HEK293T (cell line): ENCODE measurements at regions of chr16 and their contacts with region 1.

Region 1: GRCh38 chr16:700684-701584 is 4.7 kb downstream of the FBXL16 start:
- DNase-seq: peak; percentile 62

Region 2: GRCh38 chr16:626787-627186 is 74.1 kb before region 1 on chr16:
- CTCF ChIA-PET with region 1: no interaction called
- POLR2A ChIA-PET with region 1: no interaction called
- DNase-seq: no peak

Region 3: DNA sequence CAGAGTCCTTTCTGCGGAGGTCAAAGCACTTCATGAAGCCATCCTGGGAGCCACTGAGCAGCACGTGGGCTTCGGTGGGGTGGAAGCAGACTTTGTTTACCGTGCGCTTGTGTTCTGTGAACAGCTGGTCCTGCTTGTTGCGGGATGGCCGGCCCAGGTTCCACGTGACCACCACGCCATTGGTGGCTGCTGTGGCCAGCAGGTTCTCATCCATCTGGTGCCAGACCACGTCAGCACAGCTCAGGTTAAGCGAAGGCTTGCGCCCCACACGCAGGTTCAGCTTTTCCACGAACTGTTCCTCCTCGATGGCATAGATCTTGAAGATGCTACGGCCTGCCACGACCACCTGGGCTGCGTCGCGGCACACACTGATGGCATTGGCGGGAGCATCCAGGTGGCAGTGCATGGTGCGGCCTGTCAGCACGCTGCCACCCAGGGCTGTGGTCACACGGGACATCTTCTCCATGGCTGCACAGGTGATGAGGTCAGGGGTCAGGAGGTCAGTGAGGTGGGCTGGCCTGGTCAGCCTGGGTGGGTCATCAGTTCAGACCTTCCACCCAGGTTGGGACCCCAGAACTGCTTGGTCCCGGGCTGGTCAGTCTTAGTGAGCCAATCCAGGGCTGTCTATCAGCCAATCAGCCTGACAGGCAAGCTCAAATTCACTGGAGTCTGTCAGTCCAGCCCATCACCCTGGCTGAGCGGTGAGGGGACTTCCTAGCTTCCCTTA is 11.6 kb before region 1 on chr16:
- CTCF ChIA-PET with region 1: no interaction called
- POLR2A ChIA-PET with region 1: interaction called, 16 read pairs
- DNase-seq: no peak